ENCODE measurements at regions of chr11 and their contacts with region 1.

Region 1: GRCh38 chr11:77776455-77776854 is 44.1 kb downstream of the RSF1 start:
- DNase-seq: peak in 4 of 5 donors; percentile 18 to 32 (median 26)
- H3K4me3 ChIP-seq: no peak overlapping the region
- H3K4me3 Mint-ChIP-seq: no peak overlapping the region
- H3K27ac ChIP-seq: no peak overlapping the region
- H3K27ac Mint-ChIP-seq: no peak overlapping the region
- H3K4me1 ChIP-seq: peaks cover 23% of the 10 kb centered on the region
- H3K4me1 Mint-ChIP-seq: peaks cover 40 to 70% (median 50%) of the 10 kb centered on the region in 4 donors
- H3K27me3 ChIP-seq: no peaks in the 10 kb centered on the region
- H3K27me3 Mint-ChIP-seq: no peaks in the 10 kb centered on the region

Region 2: GRCh38 chr11:77630157-77630710 is 146.2 kb before region 1 on chr11:
- CTCF ChIA-PET with region 1: no interaction called
- POLR2A ChIA-PET with region 1: no interaction called
- intact Hi-C with region 1: no loop called
- DNase-seq: no peak
- H3K4me3 ChIP-seq: no peak overlapping the region
- H3K4me3 Mint-ChIP-seq: peak overlapping the region in 2 of 8 donors; percentile 53 to 59
- H3K27ac ChIP-seq: peak overlapping the region; percentile 0
- H3K27ac Mint-ChIP-seq: peak overlapping the region in 4 of 7 donors; percentile 28 to 80 (median 52)
- H3K4me1 ChIP-seq: peaks cover 28% of the 10 kb centered on the region
- H3K4me1 Mint-ChIP-seq: peaks cover 23 to 44% (median 34%) of the 10 kb centered on the region in 4 donors
- H3K27me3 ChIP-seq: no peaks in the 10 kb centered on the region
- H3K27me3 Mint-ChIP-seq: no peaks in the 10 kb centered on the region

Region 3: DNA sequence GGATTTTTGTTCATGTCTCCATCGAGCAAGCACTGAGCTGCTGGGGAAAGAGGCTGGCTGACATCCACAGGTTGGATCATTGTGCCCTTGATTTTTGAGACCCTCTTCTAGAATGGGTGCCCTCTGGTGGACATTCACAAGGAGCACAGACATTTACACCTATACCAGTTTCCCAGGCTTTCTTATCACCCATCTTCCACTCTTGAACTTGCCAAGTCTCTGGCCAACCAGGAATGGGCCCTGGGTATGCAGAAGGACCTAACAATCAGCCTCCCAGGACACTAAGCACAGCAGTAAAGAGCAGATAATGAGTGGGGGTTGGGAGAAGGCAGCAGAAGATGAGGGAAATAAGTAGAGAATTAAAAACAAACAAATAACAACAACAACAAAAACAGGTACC is 223.7 kb after region 1 on chr11:
- CTCF ChIA-PET with region 1: interaction called, 6 read pairs
- POLR2A ChIA-PET with region 1: no interaction called
- intact Hi-C with region 1: loop called (anchors 1 kb)
- DNase-seq: peak; percentile 41 to 52 (median 48)
- H3K4me3 ChIP-seq: no peak overlapping the region
- H3K4me3 Mint-ChIP-seq: peak overlapping the region in 2 of 8 donors; percentile 18 to 60
- H3K27ac ChIP-seq: no peak overlapping the region
- H3K27ac Mint-ChIP-seq: peak overlapping the region in 3 of 7 donors; percentile 35 to 61 (median 44)
- H3K4me1 ChIP-seq: peaks cover 7% of the 10 kb centered on the region
- H3K4me1 Mint-ChIP-seq: peaks cover 4 to 7% (median 4%) of the 10 kb centered on the region in 4 donors
- H3K27me3 ChIP-seq: no peaks in the 10 kb centered on the region
- H3K27me3 Mint-ChIP-seq: peaks cover 0 to 2% of the 10 kb centered on the region in 2 donors